ENCODE measurements at regions of chr3 and their contacts with region 1.

Region 1: DNA sequence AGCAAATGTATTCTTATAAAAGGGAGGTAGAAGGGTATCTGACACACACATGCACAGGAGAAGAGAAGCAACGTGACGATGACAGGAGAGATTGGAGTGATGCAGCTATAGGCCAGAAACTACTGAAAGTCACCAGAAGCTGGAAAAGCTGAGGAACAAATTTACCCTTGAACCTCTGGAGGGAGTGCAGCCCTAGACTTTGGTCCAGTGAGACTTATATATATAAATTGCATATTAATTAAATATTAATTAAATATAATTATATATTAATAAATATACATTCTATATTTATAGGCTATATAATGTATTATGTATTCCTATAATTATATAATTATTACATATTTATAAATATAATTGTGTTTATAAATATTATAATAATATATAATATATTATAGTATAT is 96.5 kb upstream of the LMCD1 start:
- H3K4me3 ChIP-seq: no peak overlapping the region
- H3K27ac ChIP-seq: no peak overlapping the region
- H3K4me1 ChIP-seq: no peaks in the 10 kb centered on the region
- CTCF ChIP-seq: no peak

Region 2: DNA sequence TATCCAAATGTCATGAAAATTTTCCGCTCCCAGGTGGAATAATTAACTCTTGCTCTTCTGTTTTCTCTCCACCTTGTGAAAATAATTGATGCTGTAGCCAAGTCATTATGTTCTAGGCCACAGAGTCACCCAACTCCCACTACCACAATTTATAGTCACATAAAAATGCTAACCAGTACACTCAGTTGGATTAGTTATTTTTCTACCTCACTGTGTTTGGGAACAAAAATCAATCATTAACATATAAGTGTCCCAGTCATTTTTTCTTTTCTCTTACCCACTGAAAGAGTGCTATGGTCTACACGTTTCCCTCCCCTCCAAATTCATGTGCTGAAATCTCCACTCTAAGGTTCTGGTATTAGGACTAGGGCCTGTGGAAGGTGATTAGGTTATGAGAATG is 159.1 kb before region 1 on chr3:
- CTCF ChIA-PET with region 1: no interaction called
- POLR2A ChIA-PET with region 1: no interaction called
- H3K4me3 ChIP-seq: no peak overlapping the region
- H3K27ac ChIP-seq: no peak overlapping the region
- H3K4me1 ChIP-seq: no peaks in the 10 kb centered on the region
- CTCF ChIP-seq: no peak

Region 3: DNA sequence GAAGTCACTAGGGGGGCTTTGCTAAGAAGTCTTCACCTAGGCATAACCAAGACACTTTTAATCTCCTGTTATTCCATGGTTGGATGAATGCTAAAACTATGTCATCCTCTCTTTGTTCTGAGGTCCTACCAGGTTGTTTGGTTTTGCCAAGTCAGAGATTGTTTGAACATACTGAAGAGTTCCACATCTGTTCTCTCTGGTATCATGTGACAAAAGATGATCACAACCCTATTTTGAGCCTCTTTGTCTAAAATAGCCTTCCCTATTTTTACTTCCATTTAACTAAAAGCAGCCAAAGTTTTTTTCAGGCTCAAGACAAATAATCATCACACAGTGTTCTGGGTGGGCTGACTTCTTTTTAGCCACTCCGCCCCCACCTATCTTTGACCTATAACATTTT is 122.0 kb before region 1 on chr3:
- CTCF ChIA-PET with region 1: no interaction called
- POLR2A ChIA-PET with region 1: interaction called, 11 read pairs
- H3K4me3 ChIP-seq: no peak overlapping the region
- H3K27ac ChIP-seq: no peak overlapping the region
- H3K4me1 ChIP-seq: no peaks in the 10 kb centered on the region
- CTCF ChIP-seq: no peak